ENCODE measurements at regions of chr6 and their contacts with region 1.

Region 1: GRCh38 chr6:119442776-119443184 is 93.2 kb upstream of the MAN1A1 start:
- DNase-seq: no peak
- ATAC-seq: no peak
- H3K4me3 ChIP-seq: no peak overlapping the region
- H3K27ac ChIP-seq: no peak overlapping the region
- H3K4me1 ChIP-seq: no peaks in the 10 kb centered on the region
- H3K27me3 ChIP-seq: no peaks in the 10 kb centered on the region
- CTCF ChIP-seq: no peak

Region 2: GRCh38 chr6:119296036-119297035 is 146.4 kb before region 1 on chr6:
- CTCF ChIA-PET with region 1: no interaction called
- POLR2A ChIA-PET with region 1: interaction called, 11 read pairs
- in situ Hi-C with region 1: no loop called
- intact Hi-C with region 1: no loop called
- DNase-seq: no peak
- ATAC-seq: no peak
- H3K4me3 ChIP-seq: no peak overlapping the region
- H3K27ac ChIP-seq: no peak overlapping the region
- H3K4me1 ChIP-seq: no peaks in the 10 kb centered on the region
- H3K27me3 ChIP-seq: no peaks in the 10 kb centered on the region
- CTCF ChIP-seq: no peak

Measured in Panc1 (cell line).